Ovary (tissue), 10 donors: ENCODE measurements at regions of chr3 and their contacts with region 1.

Region 1: GRCh38 chr3:138923531-138923994 is 23.4 kb downstream of the FOXL2 start:
- DNase-seq: peak; percentile 33 to 73 (median 64)
- H3K4me3 ChIP-seq: no peak overlapping the region
- H3K27ac ChIP-seq: no peak overlapping the region
- H3K4me1 ChIP-seq: peaks cover 1% of the 10 kb centered on the region
- H3K27me3 ChIP-seq: no peaks in the 10 kb centered on the region
- CTCF ChIP-seq: peak; percentile 22 to 51 (median 40)
- EP300 ChIP-seq: no peak
- POLR2A ChIP-seq: no peak

Region 2: GRCh38 chr3:138417559-138417982 is 506.0 kb before region 1 on chr3:
- intact Hi-C with region 1: loop called in 1 of 4 experiments (anchors 5 kb)
- DNase-seq: peak; percentile 78 to 85 (median 82)
- H3K4me3 ChIP-seq: no peak overlapping the region
- H3K27ac ChIP-seq: no peak overlapping the region
- H3K4me1 ChIP-seq: no peaks in the 10 kb centered on the region
- H3K27me3 ChIP-seq: no peaks in the 10 kb centered on the region
- CTCF ChIP-seq: peak; percentile 70 to 77 (median 76)
- EP300 ChIP-seq: no peak
- POLR2A ChIP-seq: no peak

Region 3: DNA sequence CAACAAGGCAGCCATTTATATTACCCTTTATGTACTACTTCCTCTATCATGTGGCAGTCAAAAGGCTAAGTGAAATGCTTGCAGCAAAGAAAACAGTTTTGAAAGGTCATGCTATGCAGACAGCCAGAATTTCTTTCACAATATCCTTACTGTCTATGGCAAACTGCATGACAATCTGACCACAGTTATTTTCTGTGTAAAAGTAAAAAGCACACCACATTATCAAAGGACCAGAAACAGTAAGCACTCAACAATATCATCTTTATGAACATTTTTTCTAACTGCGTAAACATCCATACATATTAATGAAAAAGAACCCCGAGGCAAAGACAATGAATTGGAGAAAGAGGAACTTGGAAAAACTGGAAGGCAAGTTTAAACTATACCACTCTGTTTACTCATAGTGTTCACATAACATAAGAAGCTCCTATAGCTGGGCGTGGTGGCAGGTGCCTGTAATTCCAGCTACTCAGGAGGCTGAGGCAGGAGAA is 136.7 kb before region 1 on chr3:
- intact Hi-C with region 1: no loop called
- DNase-seq: no peak
- H3K4me3 ChIP-seq: no peak overlapping the region
- H3K27ac ChIP-seq: no peak overlapping the region
- H3K4me1 ChIP-seq: no peaks in the 10 kb centered on the region
- H3K27me3 ChIP-seq: no peaks in the 10 kb centered on the region
- CTCF ChIP-seq: no peak
- EP300 ChIP-seq: no peak
- POLR2A ChIP-seq: no peak

Region 4: GRCh38 chr3:138974462-138974861 is 50.9 kb after region 1 on chr3:
- intact Hi-C with region 1: no loop called
- DNase-seq: no peak
- H3K4me3 ChIP-seq: no peak overlapping the region
- H3K27ac ChIP-seq: no peak overlapping the region
- H3K4me1 ChIP-seq: no peaks in the 10 kb centered on the region
- H3K27me3 ChIP-seq: no peaks in the 10 kb centered on the region
- CTCF ChIP-seq: no peak
- EP300 ChIP-seq: no peak
- POLR2A ChIP-seq: no peak

Region 5: GRCh38 chr3:139020868-139021234 is 97.3 kb after region 1 on chr3 and contains the start of gene PRR23B:
- intact Hi-C with region 1: no loop called
- DNase-seq: no peak
- H3K4me3 ChIP-seq: no peak within 1 kb of the TSS
- H3K27ac ChIP-seq: no peak within 1 kb of the TSS
- H3K4me1 ChIP-seq: no peaks in the 10 kb centered on the region
- H3K27me3 ChIP-seq: no peaks in the 10 kb centered on the region
- CTCF ChIP-seq: no peak
- EP300 ChIP-seq: no peak
- POLR2A ChIP-seq: no peak
- total RNA-seq, gene PRR23B: not detected

Region 6: GRCh38 chr3:139032326-139033002 is 108.9 kb after region 1 on chr3:
- intact Hi-C with region 1: no loop called
- DNase-seq: no peak
- H3K4me3 ChIP-seq: no peak overlapping the region
- H3K27ac ChIP-seq: no peak overlapping the region
- H3K4me1 ChIP-seq: no peaks in the 10 kb centered on the region
- H3K27me3 ChIP-seq: no peaks in the 10 kb centered on the region
- CTCF ChIP-seq: no peak
- EP300 ChIP-seq: no peak
- POLR2A ChIP-seq: no peak